ENCODE measurements at regions of chrX and their contacts with region 1.

Region 1: DNA sequence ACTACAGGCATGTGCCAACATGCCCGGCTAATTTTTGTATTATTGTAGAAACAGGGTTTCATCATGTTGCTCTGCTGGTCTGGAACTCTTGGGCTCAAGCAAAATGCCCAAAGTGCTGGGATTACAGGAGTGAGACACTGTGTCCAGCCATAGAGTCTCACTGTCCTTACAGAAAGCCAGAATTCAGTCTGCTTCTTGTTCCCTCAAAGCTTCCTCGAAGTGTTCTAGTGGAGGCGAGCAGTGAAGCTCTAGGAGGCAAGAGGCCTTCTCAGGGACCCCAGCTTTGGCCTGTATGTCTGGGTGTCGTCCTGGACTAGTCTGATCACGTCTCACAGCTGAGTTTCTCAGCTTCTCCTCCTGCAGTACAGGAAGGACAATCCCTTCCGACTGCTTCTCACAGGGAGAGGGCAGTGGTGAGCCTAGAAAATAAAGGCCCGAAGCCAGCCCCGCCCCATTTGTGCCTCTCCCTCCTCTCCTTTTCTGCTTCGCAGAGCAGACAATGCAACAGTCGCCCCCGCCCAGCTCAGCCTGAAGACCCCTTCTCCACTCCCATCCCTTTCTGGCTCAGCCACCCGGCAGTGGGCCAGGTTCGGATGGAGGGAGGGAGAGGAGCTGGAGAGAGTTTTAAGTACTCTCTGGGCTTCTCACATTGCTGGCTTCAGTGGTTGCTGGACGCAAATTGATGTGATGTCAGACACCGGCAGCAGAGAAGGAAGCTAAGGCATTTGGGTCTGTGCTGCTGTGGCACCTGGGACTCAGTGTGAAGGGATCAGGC is 11.1 kb upstream of the FAM3A start:
- DNase-seq: peak; percentile 72
- H3K4me3 ChIP-seq: no peak overlapping the region
- H3K27ac ChIP-seq: peak overlapping the region; percentile 74 to 77
- H3K4me1 ChIP-seq: no peaks in the 10 kb centered on the region
- H3K27me3 ChIP-seq: no peaks in the 10 kb centered on the region
- CTCF ChIP-seq: peak in 3 of 4 experiments; percentile 32 to 61 (median 60)
- POLR2A ChIP-seq: peak; percentile 8

Region 2: GRCh38 chrX:154411322-154411980 is 115.6 kb before region 1 on chrX and contains the start of gene TAFAZZIN:
- intact Hi-C with region 1: loop called (anchors 1 kb)
- DNase-seq: peak; percentile 44
- H3K4me3 ChIP-seq: peak within 1 kb of the TSS; percentile 63 to 64
- H3K27ac ChIP-seq: peak within 1 kb of the TSS; percentile 88 to 92
- H3K4me1 ChIP-seq: no peaks in the 10 kb centered on the region
- H3K27me3 ChIP-seq: no peaks in the 10 kb centered on the region
- CTCF ChIP-seq: peak in 1 of 4 experiments; percentile 17
- POLR2A ChIP-seq: peak; percentile 56
- total RNA-seq, gene TAFAZZIN: 25.7 to 56.5 TPM

Region 3: DNA sequence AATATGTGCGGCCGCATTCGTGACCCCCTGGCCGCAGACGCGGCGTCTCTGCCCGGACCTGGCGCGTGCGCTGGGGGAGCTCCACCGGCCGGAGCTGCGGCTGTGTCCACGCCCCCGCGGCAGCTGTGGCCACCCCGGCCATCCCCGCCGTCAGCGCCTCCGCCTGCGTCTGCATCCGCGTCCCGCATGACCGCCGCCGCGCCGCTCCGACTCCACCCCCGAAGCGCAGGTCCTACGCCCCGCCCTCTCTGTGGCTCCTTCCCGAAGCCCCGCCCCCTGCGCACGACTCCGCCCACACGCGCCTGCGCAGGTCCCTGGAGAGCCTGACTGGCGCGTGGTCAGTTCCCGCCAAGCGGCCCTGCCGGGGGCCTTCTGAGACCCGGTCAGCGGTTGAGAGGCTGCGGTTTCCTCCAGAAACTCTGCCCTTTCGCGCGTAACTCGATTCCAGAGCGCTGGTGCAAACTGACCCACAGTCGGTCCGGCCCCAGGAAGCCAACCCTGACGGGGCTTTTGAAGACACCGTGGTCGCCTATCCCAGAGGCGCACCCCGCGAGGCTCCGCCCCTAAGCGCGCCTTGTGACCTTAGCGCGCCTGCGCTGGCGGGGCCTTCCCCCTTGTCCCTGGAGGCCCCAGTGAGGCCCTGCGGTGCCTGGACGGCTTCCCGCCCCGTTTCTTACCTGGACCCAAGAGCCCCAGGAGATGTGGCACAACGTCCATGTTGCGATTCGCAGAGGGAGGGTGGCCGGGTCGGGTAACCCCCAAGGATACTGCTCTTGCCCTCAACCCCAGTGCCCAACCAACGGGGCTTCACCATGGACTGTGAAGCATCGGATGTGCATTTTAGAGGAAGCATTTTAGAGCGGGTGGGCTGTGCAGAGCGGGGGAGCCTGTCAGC is 48.1 kb before region 1 on chrX and contains the start of gene LAGE3:
- intact Hi-C with region 1: no loop called
- DNase-seq: peak; percentile 87
- H3K4me3 ChIP-seq: peak within 1 kb of the TSS; percentile 41 to 43
- H3K27ac ChIP-seq: peak within 1 kb of the TSS; percentile 72 to 73
- H3K4me1 ChIP-seq: no peaks in the 10 kb centered on the region
- H3K27me3 ChIP-seq: no peaks in the 10 kb centered on the region
- CTCF ChIP-seq: no peak
- POLR2A ChIP-seq: peak; percentile 82
- total RNA-seq, gene LAGE3: 39.1 to 44.2 TPM

Region 4: GRCh38 chrX:154490414-154491083 is 36.5 kb before region 1 on chrX and contains the start of gene SLC10A3:
- intact Hi-C with region 1: loop called (anchors 5 kb)
- DNase-seq: peak; percentile 91
- H3K4me3 ChIP-seq: peak within 1 kb of the TSS; percentile 47 to 57
- H3K27ac ChIP-seq: peak within 1 kb of the TSS; percentile 93 to 94
- H3K4me1 ChIP-seq: no peaks in the 10 kb centered on the region
- H3K27me3 ChIP-seq: no peaks in the 10 kb centered on the region
- CTCF ChIP-seq: peak in 1 of 4 experiments; percentile 21
- POLR2A ChIP-seq: peak; percentile 86
- total RNA-seq, gene SLC10A3: 28.0 to 45.6 TPM